Uterus (tissue), 4 donors: ENCODE measurements at regions of chr16 and their contacts with region 1.

Region 1: GRCh38 chr16:3983081-3983520 is 102.6 kb upstream of the CREBBP start:
- DNase-seq: peak; percentile 71 to 75
- H3K4me3 ChIP-seq: no peak overlapping the region
- H3K27ac ChIP-seq: no peak overlapping the region
- H3K4me1 ChIP-seq: no peaks in the 10 kb centered on the region
- H3K27me3 ChIP-seq: no peaks in the 10 kb centered on the region
- CTCF ChIP-seq: peak; percentile 52 to 86 (median 71)
- POLR2A ChIP-seq: no peak

Region 2: GRCh38 chr16:4019371-4019791 is 36.3 kb after region 1 on chr16:
- intact Hi-C with region 1: no loop called
- DNase-seq: no peak
- H3K4me3 ChIP-seq: peak overlapping the region; percentile 7 to 31
- H3K27ac ChIP-seq: peak overlapping the region; percentile 69 to 79
- H3K4me1 ChIP-seq: no peaks in the 10 kb centered on the region
- H3K27me3 ChIP-seq: no peaks in the 10 kb centered on the region
- CTCF ChIP-seq: no peak
- POLR2A ChIP-seq: no peak

Region 3: GRCh38 chr16:4116337-4117249 is 133.5 kb after region 1 on chr16 and contains the start of gene ADCY9:
- intact Hi-C with region 1: loop called (anchors 10 kb)
- DNase-seq: peak; percentile 64 to 77
- H3K4me3 ChIP-seq: peak within 1 kb of the TSS; percentile 59 to 75
- H3K27ac ChIP-seq: peak within 1 kb of the TSS; percentile 85 to 88
- H3K4me1 ChIP-seq: peaks cover 0 to 6% of the 10 kb centered on the region in 2 donors
- H3K27me3 ChIP-seq: no peaks in the 10 kb centered on the region
- CTCF ChIP-seq: peak in 1 of 4 experiments; percentile 10
- POLR2A ChIP-seq: peak in 1 of 2 donors; percentile 72
- total RNA-seq, gene ADCY9: 2.8 to 34.7 (median 20.2) TPM

Region 4: DNA sequence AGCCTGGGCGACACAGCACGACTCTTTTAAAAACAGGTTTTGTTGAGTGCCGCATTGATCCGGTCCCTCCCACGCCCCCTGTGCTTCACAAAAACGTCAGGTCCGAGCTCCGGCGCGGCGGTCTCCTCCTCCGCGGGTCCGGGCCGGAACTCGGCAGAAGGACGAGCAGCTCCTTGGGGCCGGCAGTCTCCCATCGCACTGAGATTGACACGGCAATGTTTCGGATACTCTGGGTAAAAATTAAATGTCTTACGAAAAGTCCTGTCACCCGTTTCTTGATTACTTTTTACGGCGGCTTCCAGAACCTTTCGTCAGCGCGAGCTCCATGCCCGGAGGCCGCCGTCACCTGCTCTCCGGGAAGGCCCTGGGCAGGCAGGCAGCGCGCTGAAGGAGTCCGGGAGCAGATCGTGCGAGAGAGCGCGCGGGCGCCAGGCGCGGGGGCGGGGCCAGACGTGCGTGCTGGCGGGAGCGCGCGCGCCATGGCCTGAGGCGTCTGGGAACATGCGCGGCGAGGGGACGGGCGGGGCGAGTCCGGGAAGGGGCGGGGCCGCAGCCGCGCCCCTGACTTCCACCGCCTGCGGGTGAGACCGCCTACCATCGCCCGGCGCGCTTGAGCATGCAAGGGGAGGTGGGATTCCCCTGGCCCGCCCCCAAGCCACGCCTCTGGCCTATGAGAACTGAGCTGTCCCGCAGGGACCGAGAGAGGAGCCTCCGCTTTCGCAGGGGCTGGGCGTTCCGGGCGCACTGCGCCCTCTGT is 270.5 kb after region 1 on chr16:
- intact Hi-C with region 1: loop called (anchors 10 kb)
- DNase-seq: peak; percentile 100
- H3K4me3 ChIP-seq: peak overlapping the region; percentile 40 to 48
- H3K27ac ChIP-seq: peak overlapping the region; percentile 88 to 89
- H3K4me1 ChIP-seq: no peaks in the 10 kb centered on the region
- H3K27me3 ChIP-seq: no peaks in the 10 kb centered on the region
- CTCF ChIP-seq: no peak
- POLR2A ChIP-seq: peak; percentile 49 to 73